PC-3 (cell line): ENCODE measurements at regions of chr10 and their contacts with region 1.

Region 1: GRCh38 chr10:75899816-75900390 is 468.5 kb downstream of the LRMDA start:
- DNase-seq: no peak
- ATAC-seq: no peak
- H3K4me3 ChIP-seq: no peak overlapping the region
- H3K27ac ChIP-seq: no peak overlapping the region
- H3K4me1 ChIP-seq: no peaks in the 10 kb centered on the region
- H3K27me3 ChIP-seq: peaks cover 85% of the 10 kb centered on the region
- CTCF ChIP-seq: no peak

Region 2: DNA sequence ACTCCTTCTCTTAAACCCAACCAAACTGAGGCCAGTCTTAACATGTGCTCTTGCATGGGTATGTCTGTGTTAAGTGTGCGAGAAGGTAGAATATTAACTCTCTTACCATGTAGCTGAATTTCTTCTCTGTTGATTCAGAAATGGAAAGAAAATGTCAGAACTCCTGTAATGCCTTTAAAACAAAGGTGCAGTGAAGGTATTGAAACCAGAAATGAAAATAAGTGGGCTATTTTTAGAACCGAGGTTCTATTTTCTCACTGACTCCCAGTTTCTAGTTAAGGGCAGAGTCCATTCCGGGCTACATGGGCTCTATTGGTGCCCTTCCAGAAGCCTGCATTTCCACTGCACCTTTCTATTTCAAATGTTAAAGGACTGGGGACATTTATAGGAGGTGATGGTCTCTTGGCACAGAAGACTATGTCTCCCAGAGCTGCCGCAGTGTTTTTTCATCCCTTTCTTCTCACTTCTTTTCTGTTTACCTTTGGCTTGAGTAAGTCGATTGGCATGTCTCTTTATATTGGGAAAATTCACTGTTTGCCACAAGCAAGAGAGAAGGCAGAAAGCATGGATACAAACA is 293.6 kb before region 1 on chr10:
- CTCF ChIA-PET with region 1: no interaction called
- POLR2A ChIA-PET with region 1: no interaction called
- intact Hi-C with region 1: no loop called
- DNase-seq: peak; percentile 89
- ATAC-seq: peak; percentile 82
- H3K4me3 ChIP-seq: no peak overlapping the region
- H3K27ac ChIP-seq: no peak overlapping the region
- H3K4me1 ChIP-seq: peaks cover 10% of the 10 kb centered on the region
- H3K27me3 ChIP-seq: peaks cover 48% of the 10 kb centered on the region
- CTCF ChIP-seq: no peak

Region 3: GRCh38 chr10:75935650-75936400 is 35.9 kb after region 1 on chr10:
- CTCF ChIA-PET with region 1: no interaction called
- POLR2A ChIA-PET with region 1: no interaction called
- intact Hi-C with region 1: no loop called
- DNase-seq: no peak
- ATAC-seq: peak; percentile 21
- H3K4me3 ChIP-seq: no peak overlapping the region
- H3K27ac ChIP-seq: no peak overlapping the region
- H3K4me1 ChIP-seq: no peaks in the 10 kb centered on the region
- H3K27me3 ChIP-seq: peaks cover 78% of the 10 kb centered on the region
- CTCF ChIP-seq: no peak

Region 4: DNA sequence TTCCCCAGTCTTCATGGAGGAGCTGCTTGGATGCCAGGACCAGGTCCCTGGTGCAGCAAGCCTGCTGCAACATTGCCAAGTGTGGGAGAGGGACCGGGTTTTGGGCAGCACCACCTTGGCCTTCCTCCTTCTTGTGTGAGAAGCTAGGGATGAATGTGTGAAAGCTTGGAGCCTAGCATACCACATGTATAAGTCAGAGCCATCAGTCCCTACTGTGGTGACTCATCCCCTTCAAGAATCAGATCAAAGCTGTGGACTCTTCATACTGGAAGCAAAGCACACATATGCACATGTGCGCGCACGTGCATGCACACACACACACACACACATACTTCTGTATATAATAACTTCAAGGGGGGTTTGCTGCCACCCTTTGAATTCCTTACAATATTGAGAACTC is 59.3 kb after region 1 on chr10:
- CTCF ChIA-PET with region 1: no interaction called
- POLR2A ChIA-PET with region 1: no interaction called
- intact Hi-C with region 1: no loop called
- DNase-seq: peak; percentile 99
- ATAC-seq: peak; percentile 92
- H3K4me3 ChIP-seq: no peak overlapping the region
- H3K27ac ChIP-seq: no peak overlapping the region
- H3K4me1 ChIP-seq: peaks cover 7% of the 10 kb centered on the region
- H3K27me3 ChIP-seq: peaks cover 68% of the 10 kb centered on the region
- CTCF ChIP-seq: no peak

Region 5: DNA sequence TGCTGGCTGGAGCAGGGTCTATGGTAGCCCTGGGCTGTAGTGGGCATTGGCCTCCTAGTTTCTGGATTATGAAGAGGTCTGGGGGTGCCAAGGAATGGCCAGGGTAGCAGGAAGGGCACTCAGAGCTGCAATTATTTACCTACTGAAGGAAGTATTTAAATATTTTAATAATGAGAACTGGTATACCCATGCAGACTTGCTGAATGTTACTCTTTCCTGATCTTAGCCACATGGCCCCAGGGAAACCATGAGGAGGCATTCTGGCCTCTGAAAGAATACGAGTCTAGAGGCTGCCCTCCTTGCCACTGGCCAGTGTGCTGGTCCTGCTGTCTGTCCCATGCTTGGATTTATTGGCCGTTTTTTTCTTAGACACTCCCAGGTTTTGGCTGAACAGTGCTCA is 131.2 kb after region 1 on chr10:
- CTCF ChIA-PET with region 1: interaction called, 12 read pairs
- POLR2A ChIA-PET with region 1: no interaction called
- intact Hi-C with region 1: no loop called
- DNase-seq: no peak
- ATAC-seq: no peak
- H3K4me3 ChIP-seq: no peak overlapping the region
- H3K27ac ChIP-seq: no peak overlapping the region
- H3K4me1 ChIP-seq: peaks cover 19% of the 10 kb centered on the region
- H3K27me3 ChIP-seq: peaks cover 27% of the 10 kb centered on the region
- CTCF ChIP-seq: no peak